ENCODE measurements at regions of chr13 and their contacts with region 1.

Region 1: DNA sequence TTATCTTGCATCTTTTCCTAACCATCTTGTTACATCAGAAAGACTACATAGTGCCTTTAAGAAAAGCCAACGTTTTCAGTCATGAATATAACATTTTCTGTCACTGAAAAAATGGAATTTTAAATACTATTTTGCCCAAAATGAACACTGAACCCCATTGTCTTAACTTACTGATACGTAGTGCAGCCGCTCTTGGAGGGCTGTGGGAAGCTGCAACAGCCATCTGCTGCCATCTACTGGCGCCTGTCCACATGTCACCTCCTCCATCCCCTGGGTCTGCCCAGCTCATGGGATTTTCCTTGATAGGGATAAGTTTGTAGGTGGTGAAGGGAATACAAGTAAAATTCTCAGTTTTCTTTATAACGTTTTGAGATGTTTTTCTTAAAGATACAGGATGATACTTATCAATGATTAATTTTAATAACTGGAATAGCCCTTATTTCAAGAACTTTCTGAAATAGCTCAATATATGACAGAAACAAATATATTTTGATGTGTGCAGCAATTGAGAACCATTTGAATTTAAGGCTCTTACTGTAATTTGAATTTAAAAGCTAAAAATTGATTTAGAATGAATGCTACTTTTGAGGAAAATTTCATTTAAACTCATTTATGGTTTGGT is 73.7 kb downstream of the GGACT start:
- DNase-seq: peak; percentile 91
- H3K4me3 ChIP-seq: no peak overlapping the region
- H3K27ac ChIP-seq: no peak overlapping the region
- H3K4me1 ChIP-seq: peaks cover 0 to 25% (median 13%) of the 10 kb centered on the region in 6 donors
- H3K27me3 ChIP-seq: no peaks in the 10 kb centered on the region
- CTCF ChIP-seq: peak; percentile 70 to 95 (median 87)
- POLR2A ChIP-seq: no peak

Region 2: GRCh38 chr13:99656092-99656745 is 858.7 kb before region 1 on chr13:
- intact Hi-C with region 1: loop called (anchors 5 kb)
- DNase-seq: peak; percentile 83
- H3K4me3 ChIP-seq: no peak overlapping the region
- H3K27ac ChIP-seq: peak overlapping the region in 1 of 8 donors; percentile 14
- H3K4me1 ChIP-seq: peaks cover 5 to 45% (median 30%) of the 10 kb centered on the region in 6 donors
- H3K27me3 ChIP-seq: peaks cover 0 to 14% (median 0%) of the 10 kb centered on the region in 7 donors
- CTCF ChIP-seq: peak; percentile 69 to 93 (median 87)
- POLR2A ChIP-seq: no peak

Region 3: GRCh38 chr13:100633461-100633860 is 118.6 kb after region 1 on chr13:
- intact Hi-C with region 1: no loop called
- DNase-seq: no peak
- H3K4me3 ChIP-seq: no peak overlapping the region
- H3K27ac ChIP-seq: no peak overlapping the region
- H3K4me1 ChIP-seq: no peaks in the 10 kb centered on the region
- H3K27me3 ChIP-seq: no peaks in the 10 kb centered on the region
- CTCF ChIP-seq: no peak
- POLR2A ChIP-seq: no peak